Psoas muscle (tissue), 8 donors: ENCODE measurements at regions of chr22 and their contacts with region 1.

Region 1: DNA sequence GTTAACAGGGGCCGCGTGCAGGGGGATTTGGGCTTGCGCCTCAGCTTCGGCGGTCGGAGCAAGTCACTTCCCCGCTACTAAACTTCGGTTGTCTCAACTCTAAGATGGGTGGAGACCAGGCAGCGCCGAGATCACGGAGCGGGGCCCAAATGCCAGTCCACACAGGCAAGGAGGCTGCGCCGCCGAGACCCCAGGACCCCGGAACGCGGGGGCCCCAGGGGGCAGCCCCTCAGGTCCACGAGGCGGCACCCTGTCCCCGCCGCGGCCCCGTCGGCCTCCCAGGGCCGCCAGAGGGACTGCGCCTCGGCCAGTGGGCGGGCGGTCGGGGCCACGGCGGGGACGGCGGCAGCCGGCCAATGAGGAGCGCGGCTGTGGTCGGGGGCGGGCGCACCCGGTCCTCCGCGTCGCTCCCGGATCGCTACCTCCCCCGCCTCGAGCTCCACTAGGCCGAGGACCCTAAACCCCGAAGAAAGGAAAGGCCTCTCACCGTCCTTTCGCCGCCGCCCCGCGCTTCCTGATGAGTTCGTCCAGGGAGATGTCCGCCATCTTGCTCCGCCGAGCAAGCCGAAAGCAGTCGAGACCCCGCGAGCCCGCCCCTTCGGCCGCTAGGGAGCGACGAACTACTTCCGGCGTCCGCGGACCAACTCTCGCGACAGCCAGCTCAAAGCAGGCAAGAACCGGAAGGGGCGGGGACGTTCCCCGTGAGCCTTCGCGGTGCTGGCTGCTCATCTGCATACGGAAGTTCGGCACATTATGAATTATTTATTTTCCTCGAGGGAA is at the start of gene POLDIP3:
- DNase-seq: peak; percentile 99 to 100
- ATAC-seq: peak; percentile 85 to 89 (median 88)
- H3K4me3 ChIP-seq: peak within 1 kb of the TSS; percentile 96
- H3K27ac ChIP-seq: peak within 1 kb of the TSS; percentile 92
- H3K4me1 ChIP-seq: peaks cover 49% of the 10 kb centered on the region
- H3K27me3 ChIP-seq: no peaks in the 10 kb centered on the region
- CTCF ChIP-seq: no peak
- total RNA-seq, gene POLDIP3: 30.6 to 47.1 (median 34.9) TPM

Region 2: DNA sequence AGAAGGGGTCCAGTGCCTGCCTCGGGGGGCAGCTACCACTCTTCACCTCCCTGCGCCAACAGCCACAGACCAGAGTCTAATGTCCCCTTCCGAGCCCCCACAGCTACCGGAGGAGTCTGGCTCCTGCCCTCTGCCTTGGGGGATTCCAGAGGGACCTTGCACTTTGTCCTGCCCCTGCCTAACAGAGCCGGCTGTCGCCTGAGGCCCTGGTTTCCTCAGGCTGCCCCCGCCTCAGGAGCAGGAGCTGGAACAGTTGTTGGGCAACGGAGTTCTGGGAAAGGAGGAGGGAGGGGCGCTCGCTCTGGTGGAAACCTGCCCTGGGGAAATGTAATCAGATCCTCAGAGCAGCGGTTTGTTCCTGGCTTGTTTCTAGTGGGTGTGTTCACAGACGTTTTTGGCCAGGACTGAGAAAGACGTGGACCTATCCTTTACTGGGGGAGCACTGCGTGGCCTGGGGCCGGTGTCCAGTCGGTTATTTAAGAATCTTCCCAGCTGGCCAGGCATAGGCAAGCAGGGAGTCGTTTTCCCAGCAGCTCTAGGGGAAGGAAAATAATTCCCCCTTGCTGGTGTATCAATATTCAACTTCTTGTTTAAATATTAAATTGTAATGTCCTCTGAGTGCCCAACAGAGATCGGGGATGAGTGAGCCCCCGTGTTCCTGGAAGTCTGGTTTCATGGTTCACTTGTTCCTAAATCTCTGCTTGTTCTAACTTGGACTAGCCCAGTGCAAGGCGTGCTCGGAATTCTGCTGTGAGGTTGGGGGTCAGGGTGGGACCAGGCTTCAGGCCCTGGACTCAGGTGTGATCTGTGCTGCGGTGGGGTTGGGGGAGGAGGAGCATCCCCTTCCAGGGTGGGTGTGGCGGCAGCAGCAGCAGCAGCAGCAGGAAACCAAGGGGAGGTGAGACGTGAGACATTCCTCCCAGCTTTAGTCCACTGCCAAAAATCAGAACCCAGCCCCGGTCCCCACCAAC is 74.0 kb after region 1 on chr22:
- intact Hi-C with region 1: loop called in 1 of 2 experiments (anchors 5 kb)
- DNase-seq: peak; percentile 92 to 96
- ATAC-seq: peak; percentile 82 to 91 (median 86)
- H3K4me3 ChIP-seq: peak overlapping the region; percentile 32
- H3K27ac ChIP-seq: peak overlapping the region; percentile 90
- H3K4me1 ChIP-seq: peaks cover 62% of the 10 kb centered on the region
- H3K27me3 ChIP-seq: no peaks in the 10 kb centered on the region
- CTCF ChIP-seq: no peak

Region 3: DNA sequence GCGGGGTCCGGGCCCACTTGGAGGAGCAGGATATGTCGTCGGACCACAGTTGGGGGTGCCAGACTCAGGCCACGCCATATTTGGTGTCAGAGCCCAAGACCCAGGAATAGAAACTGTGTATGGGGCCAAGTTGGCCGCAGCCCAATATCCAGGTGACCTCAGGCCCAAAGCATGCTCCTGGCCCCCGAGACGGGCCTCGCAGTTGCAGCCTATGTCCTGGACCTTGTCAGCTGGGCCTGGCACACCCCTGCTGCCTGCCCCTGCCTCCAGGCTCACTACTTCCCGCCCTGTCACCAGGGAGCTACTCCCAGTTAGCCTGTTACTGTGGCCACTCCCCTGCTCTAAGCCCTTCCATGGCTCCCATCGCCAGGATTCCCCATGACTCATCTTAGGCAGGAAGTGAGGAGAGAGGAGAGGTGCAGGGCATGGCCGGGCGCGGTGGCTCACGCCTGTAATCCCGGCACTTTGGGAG is 83.1 kb after region 1 on chr22:
- intact Hi-C with region 1: loop called in 1 of 2 experiments (anchors 5 kb)
- DNase-seq: peak; percentile 91 to 97
- ATAC-seq: peak; percentile 85 to 88 (median 86)
- H3K4me3 ChIP-seq: no peak overlapping the region
- H3K27ac ChIP-seq: peak overlapping the region; percentile 90
- H3K4me1 ChIP-seq: peaks cover 66% of the 10 kb centered on the region
- H3K27me3 ChIP-seq: no peaks in the 10 kb centered on the region
- CTCF ChIP-seq: no peak